GM10248 (cell line): ENCODE measurements at regions of chr2 and their contacts with region 1.

Region 1: DNA sequence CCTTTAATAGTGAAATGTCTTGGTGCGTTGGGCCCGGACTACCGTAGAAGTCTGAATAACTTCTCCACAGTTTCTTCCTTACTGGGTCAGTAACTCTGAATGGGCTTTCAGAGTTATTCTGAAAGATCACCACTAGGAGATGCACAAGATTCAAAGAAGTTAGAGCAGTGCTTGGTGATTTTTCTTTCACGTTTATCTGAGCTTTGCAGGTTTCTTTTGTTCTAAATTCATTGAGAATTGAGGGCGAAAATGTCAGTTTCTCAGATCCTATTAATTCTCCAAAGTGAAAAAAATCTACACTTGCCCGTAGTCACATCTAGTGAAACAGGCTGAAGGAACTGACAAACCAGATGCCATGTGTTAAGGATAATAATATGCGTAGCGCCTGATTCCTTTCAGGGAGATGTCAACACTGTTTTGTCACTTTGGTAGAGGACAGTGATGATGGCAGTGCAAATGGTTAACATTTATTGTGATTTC is 70.1 kb downstream of the QPCT start:
- DNase-seq: peak; percentile 70
- CTCF ChIP-seq: peak; percentile 88

Region 2: GRCh38 chr2:37402636-37403035 is 11.9 kb before region 1 on chr2:
- CTCF ChIA-PET with region 1: interaction called, 45 read pairs
- POLR2A ChIA-PET with region 1: no interaction called
- DNase-seq: no peak
- CTCF ChIP-seq: no peak

Region 3: GRCh38 chr2:37436323-37436722 is 21.8 kb after region 1 on chr2:
- CTCF ChIA-PET with region 1: interaction called, 10 read pairs
- POLR2A ChIA-PET with region 1: no interaction called
- DNase-seq: no peak
- CTCF ChIP-seq: no peak

Region 4: DNA sequence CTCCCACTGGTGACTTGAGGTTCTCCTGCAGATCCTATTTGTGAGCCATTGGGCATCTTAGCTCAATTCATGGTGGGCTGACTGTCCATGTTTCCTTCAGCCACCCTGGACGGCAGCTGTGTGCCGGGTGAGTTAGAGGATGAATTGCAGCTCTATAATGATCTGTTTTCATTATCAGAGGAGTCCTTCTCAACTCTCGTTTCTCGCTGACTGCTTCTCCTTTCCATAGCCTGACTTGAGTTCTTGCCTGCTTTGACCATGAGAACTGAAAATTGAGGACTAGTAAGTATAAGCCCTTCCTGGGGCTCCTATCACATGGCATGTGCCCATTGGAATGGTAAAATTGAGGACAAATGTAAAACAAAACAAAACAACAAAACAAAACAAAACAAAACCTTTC is 135.1 kb after region 1 on chr2:
- CTCF ChIA-PET with region 1: interaction called, 16 read pairs
- POLR2A ChIA-PET with region 1: no interaction called
- DNase-seq: peak; percentile 24
- CTCF ChIP-seq: no peak

Region 5: GRCh38 chr2:37653805-37654378 is 239.4 kb after region 1 on chr2:
- CTCF ChIA-PET with region 1: interaction called, 18 read pairs
- POLR2A ChIA-PET with region 1: no interaction called
- DNase-seq: peak; percentile 45
- CTCF ChIP-seq: no peak

Region 6: GRCh38 chr2:37851828-37852584 is 437.5 kb after region 1 on chr2:
- CTCF ChIA-PET with region 1: interaction called, 16 read pairs
- POLR2A ChIA-PET with region 1: interaction called, 3 read pairs
- DNase-seq: peak; percentile 66
- CTCF ChIP-seq: no peak